CD4-positive, alpha-beta T cell (primary cell): ENCODE measurements at regions of chr10 and their contacts with region 1.

Region 1: GRCh38 chr10:17023386-17024298 is 106.0 kb downstream of the CUBN start:
- DNase-seq: peak; percentile 46 to 95 (median 66)
- ATAC-seq: peak; percentile 74
- H3K4me3 ChIP-seq: no peak overlapping the region
- H3K4me3 Mint-ChIP-seq: peak overlapping the region; percentile 43
- H3K27ac ChIP-seq: peak overlapping the region; percentile 83 to 89
- H3K27ac Mint-ChIP-seq: peak overlapping the region; percentile 83
- H3K4me1 ChIP-seq: peaks cover 46% of the 10 kb centered on the region
- H3K4me1 Mint-ChIP-seq: peaks cover 62% of the 10 kb centered on the region
- H3K27me3 ChIP-seq: no peaks in the 10 kb centered on the region
- H3K27me3 Mint-ChIP-seq: no peaks in the 10 kb centered on the region
- CTCF ChIP-seq: no peak

Region 2: DNA sequence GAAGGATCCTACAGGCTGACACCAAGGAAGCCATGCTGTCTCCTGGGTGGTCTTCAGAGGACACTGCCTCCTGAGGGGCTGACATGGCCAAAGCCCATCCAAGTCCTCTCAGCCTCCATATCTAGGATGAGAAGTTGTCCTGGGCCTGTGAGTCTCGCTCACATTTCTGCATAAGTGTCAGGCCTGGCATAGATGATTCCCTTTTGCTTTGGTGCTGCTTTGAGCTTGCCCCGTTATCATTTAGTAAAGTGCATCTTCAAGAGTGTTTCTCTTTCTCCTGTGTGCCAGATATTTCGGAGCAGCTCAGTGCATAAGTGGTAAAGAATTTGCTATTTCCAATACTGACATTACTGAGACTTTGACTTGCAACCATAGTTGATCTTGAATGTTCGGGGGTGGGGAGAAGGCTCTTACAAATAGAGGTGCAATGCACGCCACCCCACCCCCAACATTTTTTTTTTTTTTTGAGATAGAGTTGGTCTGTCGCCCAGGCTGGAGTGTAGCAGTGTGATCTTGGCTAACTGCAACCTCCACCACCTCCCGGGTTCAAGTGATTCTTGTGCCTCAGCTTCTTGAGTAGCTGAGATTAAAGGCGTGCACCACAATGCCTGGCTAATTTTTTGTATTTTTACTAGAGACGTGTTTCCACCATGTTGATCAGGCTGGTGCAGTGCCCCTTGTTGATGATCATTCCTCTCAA is 577.7 kb before region 1 on chr10:
- CTCF ChIA-PET with region 1: no interaction called
- POLR2A ChIA-PET with region 1: no interaction called
- intact Hi-C with region 1: no loop called
- DNase-seq: no peak
- ATAC-seq: no peak
- H3K4me3 ChIP-seq: no peak overlapping the region
- H3K4me3 Mint-ChIP-seq: no peak overlapping the region
- H3K27ac ChIP-seq: no peak overlapping the region
- H3K27ac Mint-ChIP-seq: no peak overlapping the region
- H3K4me1 ChIP-seq: peaks cover 4% of the 10 kb centered on the region
- H3K4me1 Mint-ChIP-seq: peaks cover 33% of the 10 kb centered on the region
- H3K27me3 ChIP-seq: no peaks in the 10 kb centered on the region
- H3K27me3 Mint-ChIP-seq: no peaks in the 10 kb centered on the region
- CTCF ChIP-seq: no peak

Region 3: GRCh38 chr10:17001961-17002749 is 21.5 kb before region 1 on chr10:
- CTCF ChIA-PET with region 1: interaction called, 4 read pairs
- POLR2A ChIA-PET with region 1: interaction called, 9 read pairs
- intact Hi-C with region 1: loop called in 1 of 2 experiments (anchors 1 kb)
- DNase-seq: peak in 4 of 14 experiments; percentile 38 to 92 (median 70)
- ATAC-seq: peak; percentile 40
- H3K4me3 ChIP-seq: no peak overlapping the region
- H3K4me3 Mint-ChIP-seq: peak overlapping the region; percentile 59
- H3K27ac ChIP-seq: peak overlapping the region; percentile 21 to 58
- H3K27ac Mint-ChIP-seq: peak overlapping the region; percentile 95
- H3K4me1 ChIP-seq: peaks cover 28% of the 10 kb centered on the region
- H3K4me1 Mint-ChIP-seq: peaks cover 66% of the 10 kb centered on the region
- H3K27me3 ChIP-seq: no peaks in the 10 kb centered on the region
- H3K27me3 Mint-ChIP-seq: no peaks in the 10 kb centered on the region
- CTCF ChIP-seq: no peak

Region 4: GRCh38 chr10:17200912-17201793 is 177.5 kb after region 1 on chr10 and contains the start of gene TRDMT1:
- CTCF ChIA-PET with region 1: no interaction called
- POLR2A ChIA-PET with region 1: interaction called, 6 read pairs
- intact Hi-C with region 1: loop called (anchors 1 to 10 kb)
- DNase-seq: peak; percentile 62 to 89 (median 72)
- ATAC-seq: peak; percentile 66
- H3K4me3 ChIP-seq: peak within 1 kb of the TSS; percentile 69
- H3K4me3 Mint-ChIP-seq: peak within 1 kb of the TSS; percentile 89
- H3K27ac ChIP-seq: peak within 1 kb of the TSS; percentile 72 to 89
- H3K27ac Mint-ChIP-seq: peak within 1 kb of the TSS; percentile 96
- H3K4me1 ChIP-seq: peaks cover 21% of the 10 kb centered on the region
- H3K4me1 Mint-ChIP-seq: peaks cover 46% of the 10 kb centered on the region
- H3K27me3 ChIP-seq: no peaks in the 10 kb centered on the region
- H3K27me3 Mint-ChIP-seq: no peaks in the 10 kb centered on the region
- CTCF ChIP-seq: peak; percentile 8
- total RNA-seq, gene TRDMT1: 20.3 to 21.3 TPM

Region 5: DNA sequence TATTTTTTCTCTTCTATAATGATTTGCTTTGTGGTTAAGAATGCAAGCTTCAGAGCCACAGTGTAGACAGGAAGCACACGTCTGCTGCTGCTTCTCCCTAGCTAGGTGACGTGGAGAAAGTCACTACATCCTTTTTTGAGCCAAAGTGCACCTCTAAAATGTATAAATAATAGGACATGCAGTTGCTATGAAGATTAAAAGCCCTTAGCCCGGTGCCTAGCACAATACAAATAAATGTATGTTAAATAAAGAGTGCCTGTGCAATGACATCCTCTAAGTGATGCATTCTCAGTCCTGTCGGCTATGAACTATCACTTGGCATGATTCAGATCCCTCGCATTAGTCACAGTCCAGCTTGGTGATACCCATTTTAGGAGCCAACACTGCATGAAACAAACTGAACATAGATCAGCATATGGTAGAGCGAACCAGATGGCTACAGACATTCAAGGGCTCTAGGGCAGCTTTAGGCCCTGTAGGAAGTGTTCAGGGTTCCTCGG is 182.6 kb after region 1 on chr10:
- CTCF ChIA-PET with region 1: no interaction called
- POLR2A ChIA-PET with region 1: interaction called, 6 read pairs
- intact Hi-C with region 1: loop called (anchors 1 to 10 kb)
- DNase-seq: peak in 12 of 14 experiments; percentile 15 to 90 (median 34)
- ATAC-seq: peak; percentile 75
- H3K4me3 ChIP-seq: no peak overlapping the region
- H3K4me3 Mint-ChIP-seq: peak overlapping the region; percentile 47
- H3K27ac ChIP-seq: peak overlapping the region; percentile 72 to 84
- H3K27ac Mint-ChIP-seq: peak overlapping the region; percentile 96
- H3K4me1 ChIP-seq: peaks cover 23% of the 10 kb centered on the region
- H3K4me1 Mint-ChIP-seq: peaks cover 41% of the 10 kb centered on the region
- H3K27me3 ChIP-seq: no peaks in the 10 kb centered on the region
- H3K27me3 Mint-ChIP-seq: no peaks in the 10 kb centered on the region
- CTCF ChIP-seq: no peak

Region 6: DNA sequence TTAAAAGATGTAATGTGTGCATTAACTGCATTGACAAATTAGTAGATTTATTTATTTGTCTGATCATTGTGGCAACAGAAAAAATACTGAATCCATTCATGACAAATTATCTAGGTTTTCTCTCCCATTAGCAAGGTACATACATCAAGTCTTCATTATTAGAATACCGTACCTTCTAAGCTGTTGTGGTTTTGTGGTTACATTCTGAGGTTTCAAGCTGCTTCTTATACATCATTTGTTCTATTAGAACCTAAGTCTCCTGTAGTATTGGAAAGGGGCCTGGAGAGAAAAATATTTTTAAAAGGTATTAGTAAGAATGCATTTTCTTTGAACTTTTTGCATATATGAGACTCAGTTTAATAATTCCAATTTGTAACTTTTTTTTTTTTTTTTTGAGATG is 1090.2 kb after region 1 on chr10:
- CTCF ChIA-PET with region 1: no interaction called
- POLR2A ChIA-PET with region 1: no interaction called
- intact Hi-C with region 1: no loop called
- DNase-seq: no peak
- ATAC-seq: no peak
- H3K4me3 ChIP-seq: no peak overlapping the region
- H3K4me3 Mint-ChIP-seq: no peak overlapping the region
- H3K27ac ChIP-seq: no peak overlapping the region
- H3K27ac Mint-ChIP-seq: no peak overlapping the region
- H3K4me1 ChIP-seq: no peaks in the 10 kb centered on the region
- H3K4me1 Mint-ChIP-seq: no peaks in the 10 kb centered on the region
- H3K27me3 ChIP-seq: no peaks in the 10 kb centered on the region
- H3K27me3 Mint-ChIP-seq: no peaks in the 10 kb centered on the region
- CTCF ChIP-seq: no peak